ENCODE measurements at regions of chr18 and their contacts with region 1.

Region 1: DNA sequence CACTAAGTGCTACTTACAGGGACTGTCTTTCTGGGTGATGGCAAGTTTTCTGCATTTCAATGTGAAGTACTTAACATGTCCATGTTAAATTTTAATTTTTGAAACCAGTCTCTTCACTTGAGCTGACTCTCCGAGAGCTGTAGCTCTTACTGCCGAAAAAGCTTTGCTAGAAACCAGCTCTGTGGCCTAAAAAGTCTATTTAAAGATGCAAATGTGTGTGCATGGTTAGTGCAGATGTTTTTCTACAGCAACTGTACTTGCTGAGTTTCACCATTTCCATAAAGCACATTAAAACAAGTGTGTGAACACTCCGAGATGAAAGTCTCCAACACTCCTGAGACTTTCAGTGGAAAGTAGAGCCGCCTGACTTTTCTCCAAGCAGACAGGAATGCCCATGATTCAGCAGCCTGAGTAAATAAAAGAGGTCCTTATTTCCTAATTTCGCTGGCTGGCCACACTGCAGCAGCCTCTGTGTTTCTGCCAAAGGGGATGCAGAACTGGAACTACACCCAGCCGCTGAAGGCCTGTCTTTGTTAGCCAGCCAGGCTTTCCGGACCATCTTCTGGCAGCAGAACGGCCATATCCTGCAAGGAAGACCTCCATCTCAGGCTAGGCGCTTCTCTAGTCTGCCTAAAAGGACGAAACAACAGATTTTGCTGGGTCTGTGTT is 121.2 kb downstream of the ZNF521 start:
- DNase-seq: peak in 2 of 3 donors; percentile 62 to 72
- H3K4me3 ChIP-seq: peak overlapping the region in 1 of 7 experiments; percentile 39
- H3K27ac ChIP-seq: peak overlapping the region; percentile 77 to 90
- H3K4me1 ChIP-seq: peaks cover 52 to 98% (median 64%) of the 10 kb centered on the region in 4 experiments
- H3K27me3 ChIP-seq: no peaks in the 10 kb centered on the region

Region 2: DNA sequence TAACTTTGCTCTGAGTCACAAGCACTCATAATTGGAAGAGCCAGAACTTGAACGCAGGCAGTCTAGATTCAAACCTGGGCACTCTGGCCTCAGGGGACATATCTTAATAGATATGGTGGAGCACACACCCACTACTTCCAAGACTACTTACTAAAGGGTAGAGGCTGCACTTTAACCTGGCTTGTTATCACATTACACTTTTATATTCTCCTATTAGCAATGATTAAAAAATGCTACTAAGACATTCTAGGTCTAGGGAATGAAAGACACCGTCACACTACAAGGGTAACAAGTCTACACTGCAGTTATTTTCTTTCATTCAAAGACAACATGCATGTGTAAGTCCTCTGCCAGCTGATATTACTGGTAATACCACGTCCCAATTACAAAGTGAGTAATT is 137.7 kb before region 1 on chr18:
- CTCF ChIA-PET with region 1: no interaction called
- POLR2A ChIA-PET with region 1: no interaction called
- DNase-seq: no peak
- H3K4me3 ChIP-seq: no peak overlapping the region
- H3K27ac ChIP-seq: no peak overlapping the region
- H3K4me1 ChIP-seq: peaks cover 0 to 13% (median 12%) of the 10 kb centered on the region in 4 experiments
- H3K27me3 ChIP-seq: no peaks in the 10 kb centered on the region

Region 3: DNA sequence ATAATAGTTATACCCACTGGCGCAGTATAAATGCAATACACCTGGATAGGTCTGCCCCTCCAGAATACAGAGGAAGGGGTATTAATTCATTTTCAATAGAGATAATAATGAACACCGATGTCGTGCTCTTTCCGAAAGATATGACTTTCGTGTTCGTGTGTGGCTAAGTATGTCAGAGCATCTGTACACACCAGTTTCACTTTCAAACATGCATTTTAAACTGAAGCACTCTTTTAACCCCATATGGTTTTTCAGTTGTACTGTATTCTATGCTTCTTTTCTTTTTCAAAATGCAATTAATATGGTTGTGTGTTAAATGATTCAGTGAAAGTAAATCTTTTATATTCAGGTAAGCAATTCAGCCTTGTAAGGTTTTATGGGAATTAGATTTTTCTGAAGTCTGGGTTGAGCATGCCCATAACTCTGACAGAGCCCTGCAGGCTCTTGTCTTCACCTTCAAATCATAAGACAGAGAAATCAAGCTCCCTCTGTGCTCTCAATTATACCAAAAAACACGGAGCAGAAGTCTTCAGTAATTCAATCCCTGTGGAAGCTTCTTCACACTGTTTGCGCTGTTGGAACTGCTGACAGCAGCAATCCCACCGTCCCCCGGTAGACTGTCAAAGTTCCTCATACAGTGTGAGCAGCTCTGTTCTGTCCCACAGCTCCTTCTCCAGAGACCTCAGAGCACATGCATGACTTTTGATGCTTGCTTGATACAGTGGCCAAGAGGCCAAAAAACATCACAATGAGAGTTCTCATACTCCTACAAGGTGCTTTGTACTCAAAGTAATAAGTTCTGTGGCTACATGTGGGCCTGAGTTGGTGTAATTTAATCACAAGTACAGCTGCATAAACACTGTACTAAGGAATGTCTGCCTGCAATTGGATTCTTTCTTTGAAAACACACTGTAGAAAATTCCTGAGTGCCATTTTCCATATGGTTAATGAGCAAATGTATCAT is 65.7 kb before region 1 on chr18:
- CTCF ChIA-PET with region 1: interaction called, 12 read pairs
- POLR2A ChIA-PET with region 1: interaction called, 3 read pairs
- DNase-seq: peak; percentile 52 to 79 (median 71)
- H3K4me3 ChIP-seq: peak overlapping the region in 6 of 7 experiments; percentile 54 to 81 (median 68)
- H3K27ac ChIP-seq: peak overlapping the region; percentile 55 to 83
- H3K4me1 ChIP-seq: peaks cover 11 to 31% (median 21%) of the 10 kb centered on the region in 4 experiments
- H3K27me3 ChIP-seq: no peaks in the 10 kb centered on the region

Region 4: DNA sequence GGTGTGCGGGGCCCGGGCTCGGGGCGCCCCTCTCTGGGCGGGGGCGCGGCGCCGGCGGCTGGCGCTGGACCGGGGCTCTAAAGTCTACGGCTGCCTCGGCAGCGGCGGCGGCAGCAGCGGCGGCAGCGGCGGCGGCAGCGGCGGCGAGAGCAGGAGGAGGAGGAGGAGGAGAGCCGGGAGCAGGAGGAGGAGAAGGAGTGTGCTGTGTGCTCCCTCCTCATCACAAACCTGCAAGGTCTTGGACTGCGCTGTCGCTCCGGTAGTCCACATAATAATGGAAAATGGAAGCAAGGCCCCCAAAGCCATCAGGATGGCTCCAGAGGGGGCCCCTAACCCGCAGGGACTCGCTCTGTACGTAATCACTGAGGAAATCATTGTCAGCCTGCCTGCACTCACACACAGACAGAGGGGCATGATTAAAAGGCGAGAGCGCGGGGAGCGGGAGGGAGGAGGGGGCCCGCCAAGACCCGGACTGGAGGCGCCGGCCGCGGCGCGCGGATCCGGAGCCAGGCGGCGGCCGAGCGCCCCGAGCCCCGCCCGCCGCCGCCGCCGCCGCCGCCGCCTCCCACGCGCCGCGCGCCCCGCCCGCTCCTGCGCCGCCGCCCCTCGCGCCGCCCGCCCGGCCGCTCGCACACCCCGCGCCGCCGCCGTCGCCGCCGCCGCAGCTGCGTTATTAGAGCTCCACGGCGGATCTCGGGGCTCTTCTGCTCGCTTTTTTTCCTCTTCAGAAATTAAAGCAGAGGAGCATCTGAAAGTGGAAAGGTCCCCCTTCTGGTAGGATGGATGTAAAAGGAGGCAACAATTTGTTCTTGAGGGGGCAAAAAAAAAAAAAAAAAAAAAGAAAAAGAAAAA is 121.2 kb after region 1 on chr18 and contains the start of gene ZNF521:
- CTCF ChIA-PET with region 1: interaction called, 6 read pairs
- POLR2A ChIA-PET with region 1: interaction called, 29 read pairs
- DNase-seq: peak; percentile 95 to 99 (median 98)
- H3K4me3 ChIP-seq: peak within 1 kb of the TSS; percentile 67 to 98 (median 91)
- H3K27ac ChIP-seq: peak within 1 kb of the TSS; percentile 89 to 92
- H3K4me1 ChIP-seq: peaks cover 6 to 31% (median 17%) of the 10 kb centered on the region in 4 experiments
- H3K27me3 ChIP-seq: no peaks in the 10 kb centered on the region